ENCODE measurements at regions of chr14 and their contacts with region 1.

Region 1: DNA sequence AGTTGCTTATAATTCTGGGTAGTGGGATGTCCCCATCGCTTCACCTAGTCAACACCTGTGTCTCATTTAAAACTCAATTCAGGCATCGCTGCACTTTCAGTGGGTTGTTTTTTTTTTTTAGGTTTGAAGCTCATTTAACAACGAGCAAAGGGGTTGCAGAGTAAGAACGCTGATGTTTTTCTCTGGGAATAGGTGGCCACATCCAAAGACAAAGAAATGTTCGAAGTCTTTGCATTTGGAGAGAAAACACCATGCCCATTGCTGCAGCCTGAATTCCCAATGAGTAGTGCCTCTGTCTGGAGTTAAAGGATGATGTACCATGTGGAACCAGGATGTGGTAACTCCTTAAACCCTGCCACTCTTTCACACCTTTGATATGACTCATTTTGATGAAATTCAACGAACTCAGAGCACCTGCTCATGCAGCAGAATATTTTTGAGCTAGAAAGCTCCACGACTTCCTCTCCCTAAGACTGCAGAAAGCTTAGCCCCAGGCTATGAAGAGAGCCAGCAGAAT is 35.1 kb upstream of the BATF start:
- DNase-seq: no peak
- H3K4me3 ChIP-seq: no peak overlapping the region
- H3K27ac ChIP-seq: no peak overlapping the region
- H3K4me1 ChIP-seq: no peaks in the 10 kb centered on the region
- H3K27me3 ChIP-seq: no peaks in the 10 kb centered on the region
- CTCF ChIP-seq: no peak
- POLR2A ChIP-seq: no peak

Region 2: GRCh38 chr14:75126679-75127473 is 360.3 kb before region 1 on chr14 and contains the start of gene NEK9:
- intact Hi-C with region 1: loop called (anchors 5 kb)
- DNase-seq: peak; percentile 82
- H3K4me3 ChIP-seq: peak within 1 kb of the TSS; percentile 66 to 83
- H3K27ac ChIP-seq: peak within 1 kb of the TSS; percentile 82 to 89
- H3K4me1 ChIP-seq: peaks cover 6% of the 10 kb centered on the region
- H3K27me3 ChIP-seq: no peaks in the 10 kb centered on the region
- CTCF ChIP-seq: peak in 1 of 4 experiments; percentile 13
- POLR2A ChIP-seq: peak; percentile 46
- total RNA-seq, gene NEK9: 59.5 to 89.8 TPM

Region 3: DNA sequence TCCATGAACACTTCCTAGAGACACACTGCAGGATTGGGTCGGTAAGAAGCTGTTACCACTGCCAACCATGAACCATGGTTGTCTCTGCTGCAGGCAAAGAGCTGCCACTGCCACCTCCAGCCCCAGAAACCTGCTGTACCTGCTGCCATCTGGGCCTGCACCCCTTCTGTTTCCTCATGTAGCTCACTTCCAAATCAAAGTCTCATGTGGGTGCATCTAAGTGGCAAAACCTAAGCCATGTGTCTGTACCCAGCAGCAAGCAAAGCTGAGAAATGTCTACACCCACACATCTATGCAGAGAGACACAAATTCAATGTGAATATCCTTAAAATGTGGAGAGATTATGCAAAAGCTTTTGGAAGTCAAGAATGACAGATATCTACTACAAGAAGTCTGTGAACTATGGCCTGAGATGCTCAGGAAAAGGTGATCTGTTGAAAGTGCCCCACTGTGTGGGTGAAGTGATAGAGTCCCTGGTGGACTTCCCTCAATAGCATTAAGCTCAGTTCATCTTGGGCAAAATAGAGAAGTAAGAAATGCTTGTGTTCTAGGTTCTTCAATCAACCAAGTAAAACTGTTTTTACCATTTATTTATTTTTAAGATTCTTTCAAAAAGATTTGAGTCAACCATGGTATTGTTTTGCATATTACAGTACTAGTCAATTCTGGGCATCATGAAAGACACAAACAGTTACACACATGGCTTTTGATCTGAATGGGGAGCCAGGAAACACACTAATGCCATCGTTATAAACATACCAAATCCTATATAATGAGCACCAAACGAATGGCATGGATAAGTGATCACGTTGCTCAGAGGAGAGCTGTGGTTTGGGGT is 144.2 kb before region 1 on chr14:
- intact Hi-C with region 1: no loop called
- DNase-seq: no peak
- H3K4me3 ChIP-seq: no peak overlapping the region
- H3K27ac ChIP-seq: no peak overlapping the region
- H3K4me1 ChIP-seq: no peaks in the 10 kb centered on the region
- H3K27me3 ChIP-seq: no peaks in the 10 kb centered on the region
- CTCF ChIP-seq: no peak
- POLR2A ChIP-seq: no peak

Region 4: GRCh38 chr14:75440733-75441477 is 46.3 kb before region 1 on chr14:
- intact Hi-C with region 1: no loop called
- DNase-seq: peak; percentile 56
- H3K4me3 ChIP-seq: no peak overlapping the region
- H3K27ac ChIP-seq: peak overlapping the region; percentile 2 to 23
- H3K4me1 ChIP-seq: peaks cover 8% of the 10 kb centered on the region
- H3K27me3 ChIP-seq: no peaks in the 10 kb centered on the region
- CTCF ChIP-seq: peak in 1 of 4 experiments; percentile 11
- POLR2A ChIP-seq: no peak

Region 5: GRCh38 chr14:75560962-75561432 is 73.8 kb after region 1 on chr14:
- intact Hi-C with region 1: loop called (anchors 5 kb)
- DNase-seq: peak; percentile 90
- H3K4me3 ChIP-seq: no peak overlapping the region
- H3K27ac ChIP-seq: no peak overlapping the region
- H3K4me1 ChIP-seq: no peaks in the 10 kb centered on the region
- H3K27me3 ChIP-seq: no peaks in the 10 kb centered on the region
- CTCF ChIP-seq: peak; percentile 82 to 93 (median 90)
- POLR2A ChIP-seq: no peak

Measured in prostate gland (tissue), 2 donors.